Naive thymus-derived CD4-positive, alpha-beta T cell (primary cell): ENCODE measurements at regions of chr2 and their contacts with region 1.

Region 1: GRCh38 chr2:25991965-25992364 is 9.7 kb upstream of the KIF3C start:
- DNase-seq: no peak
- ATAC-seq: peak; percentile 23
- H3K4me3 ChIP-seq: no peak overlapping the region
- H3K4me3 Mint-ChIP-seq: peak overlapping the region in 4 of 10 donors; percentile 28 to 82 (median 54)
- H3K27ac ChIP-seq: no peak overlapping the region
- H3K27ac Mint-ChIP-seq: peak overlapping the region in 7 of 9 donors; percentile 2 to 91 (median 48)
- H3K4me1 ChIP-seq: no peaks in the 10 kb centered on the region
- H3K4me1 Mint-ChIP-seq: peaks cover 0 to 18% (median 12%) of the 10 kb centered on the region in 7 donors
- H3K27me3 ChIP-seq: no peaks in the 10 kb centered on the region
- H3K27me3 Mint-ChIP-seq: peaks cover 0 to 17% (median 0%) of the 10 kb centered on the region in 5 donors

Region 2: DNA sequence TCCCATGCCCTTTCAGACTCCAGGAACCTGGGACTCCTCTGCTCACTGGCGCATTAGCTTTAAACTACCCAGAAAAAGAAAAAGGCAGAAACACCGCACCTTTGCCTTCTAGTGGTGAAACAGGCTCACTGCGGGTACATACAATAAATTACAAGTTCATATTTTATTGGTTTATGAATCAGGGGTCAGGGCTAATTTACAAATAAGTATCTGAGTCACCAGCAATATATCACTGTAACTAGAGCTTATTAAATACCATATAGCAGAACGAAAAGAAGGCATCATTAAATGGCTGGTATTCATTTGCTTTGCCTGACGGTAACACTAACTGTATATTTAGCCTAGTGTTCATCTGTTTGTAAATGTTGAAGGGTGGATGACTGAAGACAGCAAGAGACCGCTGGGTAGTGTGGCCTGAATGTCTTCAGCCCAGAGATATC is 291.7 kb before region 1 on chr2:
- CTCF ChIA-PET with region 1: no interaction called
- POLR2A ChIA-PET with region 1: no interaction called
- intact Hi-C with region 1: no loop called
- DNase-seq: peak in 7 of 9 donors; percentile 12 to 41 (median 34)
- ATAC-seq: peak; percentile 53
- H3K4me3 ChIP-seq: no peak overlapping the region
- H3K4me3 Mint-ChIP-seq: no peak overlapping the region
- H3K27ac ChIP-seq: no peak overlapping the region
- H3K27ac Mint-ChIP-seq: peak overlapping the region in 2 of 9 donors; percentile 6 to 81
- H3K4me1 ChIP-seq: no peaks in the 10 kb centered on the region
- H3K4me1 Mint-ChIP-seq: peaks cover 0 to 4% (median 4%) of the 10 kb centered on the region in 7 donors
- H3K27me3 ChIP-seq: no peaks in the 10 kb centered on the region
- H3K27me3 Mint-ChIP-seq: peaks cover 0 to 2% (median 0%) of the 10 kb centered on the region in 5 donors

Region 3: DNA sequence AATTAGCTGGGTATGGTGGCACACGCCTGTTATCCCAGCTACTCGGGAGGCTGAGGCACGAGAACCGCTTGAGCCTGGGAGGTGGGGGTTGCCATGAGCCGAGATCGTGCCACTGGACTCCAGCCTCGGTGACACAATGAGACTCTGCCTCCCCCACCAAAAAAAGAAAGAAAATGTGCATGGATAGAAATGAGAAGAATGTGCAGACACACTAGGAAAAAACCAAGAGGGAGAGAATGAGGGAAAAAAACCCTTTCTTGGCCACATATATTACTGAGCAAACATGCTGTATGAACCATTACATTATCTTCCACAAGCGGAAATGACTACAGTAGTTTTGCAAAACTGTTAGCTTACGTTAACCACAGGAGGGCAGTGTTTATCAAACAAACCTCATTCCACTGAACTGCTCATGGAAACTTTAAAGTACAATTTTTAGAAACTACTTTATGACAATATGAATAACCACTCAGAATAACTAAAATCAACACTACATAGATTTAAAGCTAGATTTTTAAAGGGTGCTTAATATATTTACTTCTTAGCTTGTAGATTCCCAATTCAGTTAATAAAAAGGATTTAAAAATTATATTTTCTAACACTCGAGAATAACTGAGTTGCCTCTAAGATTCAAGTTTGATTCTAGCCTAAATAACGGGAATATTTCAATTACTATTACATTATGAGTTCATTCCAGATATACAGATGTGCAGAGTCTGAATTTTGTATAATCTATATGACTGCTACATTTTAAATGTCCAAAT is 140.0 kb before region 1 on chr2:
- CTCF ChIA-PET with region 1: interaction called, 3 read pairs
- POLR2A ChIA-PET with region 1: no interaction called
- intact Hi-C with region 1: loop called (anchors 1 kb)
- DNase-seq: peak in 8 of 9 donors; percentile 34 to 77 (median 67)
- ATAC-seq: peak; percentile 99
- H3K4me3 ChIP-seq: no peak overlapping the region
- H3K4me3 Mint-ChIP-seq: peak overlapping the region in 9 of 10 donors; percentile 43 to 83 (median 74)
- H3K27ac ChIP-seq: peak overlapping the region; percentile 17
- H3K27ac Mint-ChIP-seq: peak overlapping the region in 6 of 9 donors; percentile 21 to 82 (median 50)
- H3K4me1 ChIP-seq: peaks cover 10 to 22% of the 10 kb centered on the region in 2 donors
- H3K4me1 Mint-ChIP-seq: peaks cover 38 to 55% (median 48%) of the 10 kb centered on the region in 7 donors
- H3K27me3 ChIP-seq: no peaks in the 10 kb centered on the region
- H3K27me3 Mint-ChIP-seq: no peaks in the 10 kb centered on the region

Region 4: GRCh38 chr2:26068602-26069298 is 76.8 kb after region 1 on chr2:
- CTCF ChIA-PET with region 1: no interaction called
- POLR2A ChIA-PET with region 1: no interaction called
- intact Hi-C with region 1: loop called in 1 of 2 experiments (anchors 2 kb)
- DNase-seq: peak in 7 of 9 donors; percentile 12 to 49 (median 24)
- ATAC-seq: peak; percentile 89
- H3K4me3 ChIP-seq: no peak overlapping the region
- H3K4me3 Mint-ChIP-seq: peak overlapping the region in 5 of 10 donors; percentile 19 to 62 (median 47)
- H3K27ac ChIP-seq: no peak overlapping the region
- H3K27ac Mint-ChIP-seq: peak overlapping the region in 4 of 9 donors; percentile 4 to 62 (median 32)
- H3K4me1 ChIP-seq: peaks cover 7 to 25% of the 10 kb centered on the region in 2 donors
- H3K4me1 Mint-ChIP-seq: peaks cover 46 to 72% (median 54%) of the 10 kb centered on the region in 7 donors
- H3K27me3 ChIP-seq: no peaks in the 10 kb centered on the region
- H3K27me3 Mint-ChIP-seq: no peaks in the 10 kb centered on the region

Region 5: GRCh38 chr2:26088032-26088643 is 96.2 kb after region 1 on chr2:
- CTCF ChIA-PET with region 1: no interaction called
- POLR2A ChIA-PET with region 1: no interaction called
- intact Hi-C with region 1: loop called in 1 of 2 experiments (anchors 5 kb)
- DNase-seq: peak in 7 of 9 donors; percentile 5 to 40 (median 28)
- ATAC-seq: peak; percentile 75
- H3K4me3 ChIP-seq: no peak overlapping the region
- H3K4me3 Mint-ChIP-seq: peak overlapping the region in 1 of 10 donors; percentile 0
- H3K27ac ChIP-seq: no peak overlapping the region
- H3K27ac Mint-ChIP-seq: peak overlapping the region in 1 of 9 donors; percentile 0
- H3K4me1 ChIP-seq: peaks cover 4 to 8% of the 10 kb centered on the region in 2 donors
- H3K4me1 Mint-ChIP-seq: peaks cover 34 to 52% (median 49%) of the 10 kb centered on the region in 7 donors
- H3K27me3 ChIP-seq: no peaks in the 10 kb centered on the region
- H3K27me3 Mint-ChIP-seq: no peaks in the 10 kb centered on the region

Region 6: GRCh38 chr2:26144953-26145680 is 153.2 kb after region 1 on chr2:
- CTCF ChIA-PET with region 1: interaction called, 16 read pairs
- POLR2A ChIA-PET with region 1: interaction called, 3 read pairs
- intact Hi-C with region 1: loop called (anchors 1 kb)
- DNase-seq: peak; percentile 22 to 59 (median 47)
- ATAC-seq: peak; percentile 73
- H3K4me3 ChIP-seq: no peak overlapping the region
- H3K4me3 Mint-ChIP-seq: no peak overlapping the region
- H3K27ac ChIP-seq: no peak overlapping the region
- H3K27ac Mint-ChIP-seq: peak overlapping the region in 3 of 9 donors; percentile 4 to 21 (median 7)
- H3K4me1 ChIP-seq: no peaks in the 10 kb centered on the region
- H3K4me1 Mint-ChIP-seq: peaks cover 0 to 5% (median 0%) of the 10 kb centered on the region in 7 donors
- H3K27me3 ChIP-seq: no peaks in the 10 kb centered on the region
- H3K27me3 Mint-ChIP-seq: peaks cover 6 to 10% (median 8%) of the 10 kb centered on the region in 5 donors

Region 7: DNA sequence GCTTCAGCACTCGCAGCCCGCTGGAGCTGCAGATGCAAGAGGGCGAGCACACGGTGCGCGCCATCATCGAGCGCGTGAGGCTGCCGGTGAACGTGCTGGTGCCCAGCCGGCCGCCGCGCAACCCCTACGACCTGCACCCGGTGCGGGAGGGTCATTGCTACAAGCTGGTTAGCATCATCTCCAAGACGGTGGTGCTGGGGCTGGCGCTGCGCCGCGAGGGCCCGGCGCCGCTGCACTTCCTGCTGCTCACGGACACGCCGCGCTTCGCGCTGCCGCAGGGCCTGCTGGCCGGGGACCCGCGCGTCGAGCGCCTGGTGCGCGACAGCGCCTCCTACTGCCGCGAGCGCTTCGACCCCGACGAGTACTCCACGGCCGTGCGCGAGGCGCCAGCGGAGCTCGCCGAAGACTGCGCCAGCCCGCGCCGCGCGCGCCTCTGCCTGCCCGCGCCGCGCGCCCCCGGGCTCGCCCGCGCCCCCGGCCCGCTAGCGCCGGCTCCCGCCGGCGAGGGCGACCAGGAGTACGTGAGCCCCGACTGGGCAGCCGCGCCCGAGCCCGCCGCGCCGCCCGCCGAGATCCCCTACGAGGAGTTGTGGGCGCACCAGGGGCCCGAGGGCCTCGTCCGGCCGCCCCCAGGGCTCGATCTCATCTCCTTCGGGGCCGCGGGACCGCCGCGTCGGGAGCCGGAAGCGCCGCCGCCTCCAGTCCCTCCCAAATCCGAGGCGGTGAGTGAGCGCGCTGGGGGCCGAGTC is 192.8 kb after region 1 on chr2:
- CTCF ChIA-PET with region 1: interaction called, 5 read pairs
- POLR2A ChIA-PET with region 1: interaction called, 6 read pairs
- intact Hi-C with region 1: loop called in 1 of 2 experiments (anchors 2 kb)
- DNase-seq: peak; percentile 82 to 91 (median 88)
- ATAC-seq: peak; percentile 98
- H3K4me3 ChIP-seq: peak overlapping the region; percentile 68
- H3K4me3 Mint-ChIP-seq: peak overlapping the region; percentile 79 to 91 (median 85)
- H3K27ac ChIP-seq: peak overlapping the region; percentile 71
- H3K27ac Mint-ChIP-seq: peak overlapping the region in 7 of 9 donors; percentile 25 to 90 (median 67)
- H3K4me1 ChIP-seq: peaks cover 5 to 8% of the 10 kb centered on the region in 2 donors
- H3K4me1 Mint-ChIP-seq: peaks cover 6 to 30% (median 23%) of the 10 kb centered on the region in 7 donors
- H3K27me3 ChIP-seq: no peaks in the 10 kb centered on the region
- H3K27me3 Mint-ChIP-seq: peaks cover 11 to 23% (median 15%) of the 10 kb centered on the region in 5 donors

Region 8: DNA sequence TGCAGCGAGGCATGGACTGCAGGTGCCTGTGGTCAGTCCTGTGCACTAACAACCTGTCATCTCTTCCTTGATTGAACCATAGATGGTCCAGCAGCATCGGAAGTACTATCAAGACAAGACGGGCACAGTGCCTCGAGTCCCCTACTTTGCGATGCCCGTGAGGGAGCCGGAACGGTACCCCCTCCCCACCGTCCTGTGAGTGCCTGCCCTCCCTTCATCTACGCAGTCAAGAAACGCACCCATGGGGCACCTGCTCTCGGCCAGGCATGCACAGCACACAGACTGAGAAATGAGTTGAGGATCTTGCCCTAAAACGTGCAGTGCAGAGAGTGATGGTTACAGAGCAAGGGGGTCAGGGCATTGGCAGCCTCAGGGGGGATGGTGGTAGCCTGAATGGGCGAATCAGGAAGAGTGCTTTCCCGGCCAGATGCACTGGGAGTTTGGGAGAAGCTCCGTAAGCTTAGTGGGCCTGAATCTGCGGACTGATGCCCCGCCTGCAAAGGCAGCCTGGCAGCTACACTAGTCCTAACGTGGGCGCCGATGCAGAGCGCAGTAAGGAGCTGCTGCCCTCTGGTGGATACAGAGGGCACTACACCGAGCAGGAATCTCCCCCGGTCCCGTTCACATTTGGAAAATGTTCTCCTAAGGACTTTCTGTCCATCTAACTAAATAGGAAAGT is 585.6 kb after region 1 on chr2:
- CTCF ChIA-PET with region 1: interaction called, 3 read pairs
- POLR2A ChIA-PET with region 1: no interaction called
- intact Hi-C with region 1: loop called in 1 of 2 experiments (anchors 1 kb)
- DNase-seq: peak; percentile 17 to 66 (median 52)
- ATAC-seq: peak; percentile 88
- H3K4me3 ChIP-seq: no peak overlapping the region
- H3K4me3 Mint-ChIP-seq: no peak overlapping the region
- H3K27ac ChIP-seq: no peak overlapping the region
- H3K27ac Mint-ChIP-seq: no peak overlapping the region
- H3K4me1 ChIP-seq: no peaks in the 10 kb centered on the region
- H3K4me1 Mint-ChIP-seq: peaks cover 0 to 5% (median 0%) of the 10 kb centered on the region in 7 donors
- H3K27me3 ChIP-seq: peaks cover 0 to 5% of the 10 kb centered on the region in 2 donors
- H3K27me3 Mint-ChIP-seq: peaks cover 5 to 13% (median 10%) of the 10 kb centered on the region in 5 donors

Region 9: GRCh38 chr2:26901326-26902183 is 909.6 kb after region 1 on chr2:
- CTCF ChIA-PET with region 1: no interaction called
- POLR2A ChIA-PET with region 1: no interaction called
- intact Hi-C with region 1: no loop called
- DNase-seq: no peak
- ATAC-seq: no peak
- H3K4me3 ChIP-seq: no peak overlapping the region
- H3K4me3 Mint-ChIP-seq: no peak overlapping the region
- H3K27ac ChIP-seq: no peak overlapping the region
- H3K27ac Mint-ChIP-seq: peak overlapping the region in 1 of 9 donors; percentile 36
- H3K4me1 ChIP-seq: no peaks in the 10 kb centered on the region
- H3K4me1 Mint-ChIP-seq: no peaks in the 10 kb centered on the region
- H3K27me3 ChIP-seq: no peaks in the 10 kb centered on the region
- H3K27me3 Mint-ChIP-seq: peaks cover 0 to 21% (median 6%) of the 10 kb centered on the region in 5 donors